AG04449 (cell line): ENCODE measurements at regions of chr11 and their contacts with region 1.

Region 1: GRCh38 chr11:82927254-82927880 is 25.8 kb downstream of the DDIAS start:
- DNase-seq: peak; percentile 17
- H3K4me3 ChIP-seq: no peak overlapping the region
- CTCF ChIP-seq: peak; percentile 69

Region 2: GRCh38 chr11:82906244-82906654 is 21.1 kb before region 1 on chr11:
- CTCF ChIA-PET with region 1: interaction called, 10 read pairs
- POLR2A ChIA-PET with region 1: no interaction called
- DNase-seq: no peak
- H3K4me3 ChIP-seq: no peak overlapping the region
- CTCF ChIP-seq: no peak

Region 3: GRCh38 chr11:82939456-82939855 is 12.1 kb after region 1 on chr11:
- CTCF ChIA-PET with region 1: interaction called, 12 read pairs
- POLR2A ChIA-PET with region 1: no interaction called
- DNase-seq: no peak
- H3K4me3 ChIP-seq: no peak overlapping the region
- CTCF ChIP-seq: no peak